ENCODE measurements at regions of chr11 and their contacts with region 1.

Region 1: GRCh38 chr11:125923012-125923579 is 18.8 kb downstream of the DDX25 start:
- DNase-seq: peak; percentile 30 to 88 (median 74)

Region 2: GRCh38 chr11:125663910-125664309 is 259.2 kb before region 1 on chr11:
- intact Hi-C with region 1: no loop called
- DNase-seq: no peak

Region 3: GRCh38 chr11:126060757-126061171 is 137.7 kb after region 1 on chr11:
- intact Hi-C with region 1: no loop called
- DNase-seq: no peak

Region 4: GRCh38 chr11:126079621-126080124 is 156.6 kb after region 1 on chr11:
- intact Hi-C with region 1: loop called (anchors 10 kb)
- DNase-seq: no peak

Region 5: GRCh38 chr11:126194121-126194543 is 271.0 kb after region 1 on chr11:
- intact Hi-C with region 1: loop called (anchors 5 kb)
- DNase-seq: peak in 36 of 42 donors; percentile 17 to 85 (median 60)